Transverse colon (tissue), 4 donors: ENCODE measurements at regions of chr3 and their contacts with region 1.

Region 1: GRCh38 chr3:112348943-112349342 is 16.0 kb downstream of the CD200 start:
- DNase-seq: no peak
- H3K4me3 ChIP-seq: no peak overlapping the region
- H3K27ac ChIP-seq: no peak overlapping the region
- H3K4me1 ChIP-seq: peaks cover 0 to 4% (median 1%) of the 10 kb centered on the region in 4 donors
- H3K27me3 ChIP-seq: no peaks in the 10 kb centered on the region
- CTCF ChIP-seq: no peak
- EP300 ChIP-seq: no peak
- POLR2A ChIP-seq: no peak

Region 2: DNA sequence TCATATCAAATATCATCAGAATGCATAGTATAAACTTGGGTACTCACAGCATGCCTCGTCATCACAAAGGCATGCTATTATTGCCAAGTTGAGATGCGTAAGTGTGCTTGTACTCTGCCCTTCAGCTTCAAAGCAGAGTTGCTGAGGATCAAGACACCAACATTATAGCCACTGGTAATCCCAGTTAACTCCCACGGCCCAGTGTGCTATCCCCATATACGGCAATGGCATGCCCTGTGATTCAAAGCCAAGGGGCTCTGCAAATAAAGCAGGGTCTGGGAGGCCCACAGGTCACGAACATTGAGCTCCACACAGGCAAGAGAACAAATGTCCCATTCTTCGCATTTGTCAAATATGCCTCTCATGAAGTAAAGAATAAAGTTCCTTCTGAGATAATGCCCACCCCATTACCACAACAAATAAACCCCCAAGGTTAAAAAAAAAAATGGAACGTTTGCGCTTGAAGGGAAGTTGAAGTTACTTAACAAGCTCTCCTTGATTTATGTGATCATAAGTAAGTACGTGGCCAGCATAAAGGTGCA is 1575.5 kb before region 1 on chr3:
- in situ Hi-C with region 1: no loop called
- intact Hi-C with region 1: loop called (anchors 5 kb)
- DNase-seq: no peak
- H3K4me3 ChIP-seq: no peak overlapping the region
- H3K27ac ChIP-seq: no peak overlapping the region
- H3K4me1 ChIP-seq: no peaks in the 10 kb centered on the region
- H3K27me3 ChIP-seq: no peaks in the 10 kb centered on the region
- CTCF ChIP-seq: no peak
- EP300 ChIP-seq: no peak
- POLR2A ChIP-seq: no peak